A549 (cell line): ENCODE measurements at regions of chr5 and their contacts with region 1.

Region 1: DNA sequence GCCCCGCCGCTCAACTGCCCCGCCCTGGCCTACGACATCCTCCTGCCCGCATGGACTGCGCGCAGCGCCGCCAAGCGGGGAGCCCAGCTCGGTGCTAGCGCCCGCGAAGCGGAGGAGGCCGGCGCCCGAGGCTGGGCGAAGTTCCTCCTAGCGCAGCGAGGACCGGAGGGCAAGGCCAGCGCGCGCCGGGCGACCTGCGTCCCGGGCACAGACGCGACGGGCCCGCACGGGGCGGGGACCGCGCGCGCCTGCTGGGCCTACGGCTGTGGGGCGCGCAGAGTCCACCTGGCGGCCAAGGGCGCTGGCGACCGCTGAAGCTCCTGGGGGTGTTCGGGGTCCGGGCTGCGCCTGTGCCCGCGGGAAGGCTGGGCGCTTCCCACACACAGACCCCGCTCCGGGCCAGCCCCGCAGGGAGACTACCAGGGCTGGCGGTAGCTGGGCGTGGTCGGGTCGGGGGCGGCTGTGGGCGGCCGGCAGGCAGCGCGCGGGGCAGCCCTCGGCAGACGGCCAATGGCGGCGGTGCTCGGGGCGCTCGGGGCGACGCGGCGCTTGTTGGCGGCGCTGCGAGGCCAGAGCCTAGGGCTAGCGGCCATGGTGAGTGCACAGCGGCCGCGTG is at the start of gene PCBD2:
- DNase-seq: peak; percentile 83 to 94
- ATAC-seq: peak; percentile 89 to 92
- H3K4me3 ChIP-seq: peak within 1 kb of the TSS; percentile 74
- H3K27ac ChIP-seq: peak within 1 kb of the TSS; percentile 94 to 98
- H3K4me1 ChIP-seq: peaks cover 7% of the 10 kb centered on the region; the same call in 1 of the 3 replicates
- CTCF ChIP-seq: peak; percentile 96
- EP300 ChIP-seq: no peak
- POLR2A ChIP-seq: peak; percentile 65
- RAD21 ChIP-seq: peak; percentile 57 to 78
- polyA plus RNA-seq, gene PCBD2: 13.3 and 13.6 TPM in 2 replicates

Region 2: GRCh38 chr5:134738133-134738962 is 166.4 kb before region 1 on chr5 and contains the start of gene CAMLG:
- CTCF ChIA-PET with region 1: interaction called, 32 read pairs
- POLR2A ChIA-PET with region 1: interaction called, 11 read pairs
- DNase-seq: peak; percentile 84 to 99
- ATAC-seq: peak; percentile 93 to 96
- H3K4me3 ChIP-seq: peak within 1 kb of the TSS; percentile 85
- H3K27ac ChIP-seq: peak within 1 kb of the TSS; percentile 85 to 88
- H3K4me1 ChIP-seq: peaks cover 13% of the 10 kb centered on the region; the same call in 2 of the 3 replicates
- CTCF ChIP-seq: peak; percentile 65
- EP300 ChIP-seq: no peak
- POLR2A ChIP-seq: peak; percentile 75
- RAD21 ChIP-seq: peak; percentile 57 to 63
- polyA plus RNA-seq, gene CAMLG: 18.0 and 26.2 TPM in 2 replicates

Region 3: GRCh38 chr5:134758504-134759341 is 146.0 kb before region 1 on chr5 and contains the start of gene DDX46:
- CTCF ChIA-PET with region 1: interaction called, 15 read pairs
- POLR2A ChIA-PET with region 1: interaction called, 8 read pairs
- DNase-seq: peak; percentile 94 to 95
- ATAC-seq: peak; percentile 98 to 99
- H3K4me3 ChIP-seq: peak within 1 kb of the TSS; percentile 99
- H3K27ac ChIP-seq: peak within 1 kb of the TSS; percentile 93
- H3K4me1 ChIP-seq: peaks cover 14% of the 10 kb centered on the region
- CTCF ChIP-seq: peak; percentile 74
- EP300 ChIP-seq: no peak
- POLR2A ChIP-seq: peak; percentile 84
- RAD21 ChIP-seq: no peak
- polyA plus RNA-seq, gene DDX46: 74.7 and 104 TPM in 2 replicates

Region 4: DNA sequence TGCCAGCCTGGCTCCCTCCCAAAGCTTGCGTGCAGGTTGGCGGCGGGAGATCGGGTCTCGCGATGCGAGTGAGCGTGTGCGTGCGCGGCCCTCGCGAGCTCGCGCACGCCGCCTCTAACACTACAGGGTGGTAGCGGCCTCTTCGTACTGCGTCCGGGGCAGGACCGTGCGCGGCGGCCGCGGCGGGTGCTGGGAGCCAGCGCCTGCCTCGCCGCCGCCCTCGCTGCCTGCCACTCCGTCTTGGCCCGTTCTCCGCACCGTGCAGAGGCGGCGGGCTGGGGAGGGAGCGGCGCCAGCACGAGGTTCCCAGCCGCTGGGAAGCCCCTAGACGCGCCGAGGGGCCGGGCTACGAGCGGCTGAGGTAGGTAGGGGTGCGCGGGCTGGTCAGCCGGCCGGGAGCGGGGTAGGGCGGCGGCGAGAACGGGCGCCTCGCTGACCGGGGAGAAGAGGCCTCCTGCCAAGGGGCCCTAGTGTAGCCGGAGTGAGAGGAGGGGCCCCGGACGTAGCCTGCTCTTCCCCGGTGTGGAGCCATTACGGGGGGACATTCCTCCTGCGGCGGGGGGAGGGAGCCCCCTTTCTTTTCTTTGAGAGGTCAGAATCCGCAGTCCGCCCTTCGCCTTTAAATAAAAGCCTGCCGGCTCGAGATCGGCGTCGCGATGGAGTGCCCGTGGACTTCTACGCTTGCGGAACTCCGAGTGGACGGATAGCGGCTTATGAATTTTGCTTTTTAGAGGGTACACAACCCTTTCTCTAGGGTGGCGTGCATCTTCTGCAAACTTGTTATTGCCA is 58.7 kb before region 1 on chr5 and contains the start of gene C5orf24:
- CTCF ChIA-PET with region 1: interaction called, 12 read pairs
- POLR2A ChIA-PET with region 1: interaction called, 15 read pairs
- DNase-seq: peak; percentile 88 to 96
- ATAC-seq: peak; percentile 94
- H3K4me3 ChIP-seq: peak within 1 kb of the TSS; percentile 84
- H3K27ac ChIP-seq: peak within 1 kb of the TSS; percentile 94 to 98
- H3K4me1 ChIP-seq: peaks cover 69% of the 10 kb centered on the region
- CTCF ChIP-seq: no peak
- EP300 ChIP-seq: no peak
- POLR2A ChIP-seq: peak; percentile 98
- RAD21 ChIP-seq: no peak
- polyA plus RNA-seq, gene C5orf24: 44.6 and 53.7 TPM in 2 replicates

Region 5: DNA sequence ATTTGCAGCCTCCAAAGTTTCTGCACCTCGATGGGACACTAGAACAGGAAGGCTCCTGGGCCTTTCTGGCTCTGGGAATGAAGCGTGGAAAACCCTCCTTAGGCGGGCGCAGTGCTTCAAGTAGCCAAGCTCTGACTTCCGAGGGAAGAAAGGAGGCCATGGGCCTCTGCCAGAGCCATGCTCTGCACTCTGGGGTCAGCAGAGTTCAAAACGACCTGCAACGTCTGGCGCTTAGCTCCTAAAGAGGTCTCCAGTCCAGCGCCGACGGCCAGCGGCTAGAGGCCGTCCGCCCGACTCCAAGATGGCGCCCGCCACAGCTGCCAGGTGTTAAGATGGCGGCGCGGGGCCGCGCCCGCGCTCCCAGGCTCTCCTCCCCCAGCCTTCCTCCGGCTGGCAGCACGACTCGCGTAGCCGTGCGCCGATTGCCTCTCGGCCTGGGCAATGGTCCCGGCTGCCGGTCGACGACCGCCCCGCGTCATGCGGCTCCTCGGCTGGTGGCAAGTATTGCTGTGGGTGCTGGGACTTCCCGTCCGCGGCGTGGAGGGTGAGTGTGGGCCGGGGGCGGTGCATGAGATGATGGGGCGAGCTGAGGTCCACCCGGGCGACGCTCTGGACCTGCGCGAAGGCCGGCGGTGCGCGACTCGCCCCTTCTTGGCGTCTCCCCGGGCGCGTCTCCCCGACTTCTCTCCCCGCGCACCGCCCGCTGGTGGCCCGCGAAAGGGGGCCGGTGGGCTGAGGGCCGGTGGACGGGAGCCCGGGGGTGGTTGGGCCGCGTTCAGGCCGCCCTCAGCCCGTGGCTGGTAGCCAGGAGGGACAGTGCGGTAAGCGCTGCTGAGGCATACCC is 30.5 kb before region 1 on chr5 and contains the start of gene TXNDC15:
- CTCF ChIA-PET with region 1: interaction called, 13 read pairs
- POLR2A ChIA-PET with region 1: interaction called, 20 read pairs
- DNase-seq: peak; percentile 85 to 89
- ATAC-seq: peak; percentile 91 to 96
- H3K4me3 ChIP-seq: peak within 1 kb of the TSS; percentile 78
- H3K27ac ChIP-seq: peak within 1 kb of the TSS; percentile 95 to 96
- H3K4me1 ChIP-seq: peaks cover 10% of the 10 kb centered on the region; the same call in 2 of the 3 replicates
- CTCF ChIP-seq: no peak
- EP300 ChIP-seq: no peak
- POLR2A ChIP-seq: peak; percentile 97
- RAD21 ChIP-seq: no peak
- polyA plus RNA-seq, gene TXNDC15: 61.0 and 85.2 TPM in 2 replicates

Region 6: DNA sequence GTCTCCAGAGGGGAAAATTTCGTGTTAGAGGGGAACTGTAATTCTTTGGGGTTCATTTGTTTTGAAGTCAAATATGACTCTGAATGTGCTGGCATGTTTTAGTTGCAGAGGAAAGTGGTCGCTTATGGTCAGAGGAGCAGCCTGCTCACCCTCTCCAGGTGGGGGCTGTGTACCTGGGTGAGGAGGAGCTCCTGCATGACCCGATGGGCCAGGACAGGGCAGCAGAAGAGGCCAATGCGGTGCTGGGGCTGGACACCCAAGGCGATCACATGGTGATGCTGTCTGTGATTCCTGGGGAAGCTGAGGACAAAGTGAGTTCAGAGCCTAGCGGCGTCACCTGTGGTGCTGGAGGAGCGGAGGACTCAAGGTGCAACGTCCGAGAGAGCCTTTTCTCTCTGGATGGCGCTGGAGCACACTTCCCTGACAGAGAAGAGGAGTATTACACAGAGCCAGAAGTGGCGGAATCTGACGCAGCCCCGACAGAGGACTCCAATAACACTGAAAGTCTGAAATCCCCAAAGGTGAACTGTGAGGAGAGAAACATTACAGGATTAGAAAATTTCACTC is 17.1 kb before region 1 on chr5:
- CTCF ChIA-PET with region 1: interaction called, 28 read pairs
- POLR2A ChIA-PET with region 1: no interaction called
- DNase-seq: no peak
- ATAC-seq: 0 out of 6 replicates have a peak, but pooled peaks of 1 of the 2 experiments have one; percentile 19
- H3K4me3 ChIP-seq: no peak overlapping the region
- H3K27ac ChIP-seq: no peak overlapping the region
- H3K4me1 ChIP-seq: no peaks in the 10 kb centered on the region
- CTCF ChIP-seq: no peak
- EP300 ChIP-seq: no peak
- POLR2A ChIP-seq: no peak
- RAD21 ChIP-seq: no peak

Region 7: GRCh38 chr5:134917070-134917815 is 12.5 kb after region 1 on chr5:
- CTCF ChIA-PET with region 1: interaction called, 24 read pairs
- POLR2A ChIA-PET with region 1: interaction called, 5 read pairs
- DNase-seq: peak in 1 of 2 experiments; percentile 16
- ATAC-seq: peak in 1 of 2 experiments; percentile 74; a peak in 3 of 6 replicates
- H3K4me3 ChIP-seq: no peak overlapping the region
- H3K27ac ChIP-seq: no peak overlapping the region
- H3K4me1 ChIP-seq: no peaks in the 10 kb centered on the region
- CTCF ChIP-seq: peak; percentile 46
- EP300 ChIP-seq: no peak
- POLR2A ChIP-seq: no peak
- RAD21 ChIP-seq: peak; percentile 40 to 50; a peak in 4 of 5 replicates

Region 8: DNA sequence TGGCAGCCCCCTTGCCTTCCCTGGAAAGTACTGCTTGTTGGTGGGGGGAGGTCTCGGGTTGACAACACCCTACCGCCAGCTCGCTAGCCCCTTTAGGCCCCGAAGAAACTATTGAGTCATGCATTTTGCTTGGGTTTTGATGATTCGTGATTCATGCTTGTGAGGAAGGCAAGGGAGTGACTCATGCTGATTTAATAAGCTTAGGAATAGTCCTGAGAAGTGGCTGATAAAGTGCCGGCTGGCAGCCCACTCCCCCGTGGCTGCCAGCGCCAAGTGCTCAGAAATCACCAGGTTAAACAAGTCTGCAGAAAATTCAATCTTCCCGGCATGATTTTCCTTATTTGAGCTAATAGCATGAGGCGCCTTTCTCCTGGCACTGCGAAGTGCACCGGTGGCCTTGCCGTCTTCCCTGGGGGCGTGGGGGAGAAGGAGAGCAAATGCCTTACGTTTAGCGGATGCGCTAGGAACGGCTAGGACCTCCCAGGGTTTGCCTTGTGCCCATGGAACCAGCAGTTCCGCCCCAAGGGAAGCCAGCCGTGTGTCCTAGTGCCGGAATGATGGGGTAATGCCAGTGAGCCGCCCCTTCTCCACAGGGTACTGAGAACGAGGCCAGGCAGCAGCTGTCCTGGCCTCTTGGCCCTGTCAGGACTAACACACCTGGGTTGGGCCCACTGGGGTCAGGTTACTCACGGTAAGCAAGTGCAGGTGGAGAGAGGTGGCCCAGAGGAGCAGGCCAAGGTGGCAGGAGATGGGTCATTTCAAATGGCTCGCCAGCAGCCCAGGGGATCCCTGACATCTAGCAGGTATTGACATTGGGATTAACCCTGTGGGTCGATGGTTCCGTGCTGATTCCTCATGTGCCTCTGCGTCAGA is 342.4 kb after region 1 on chr5:
- CTCF ChIA-PET with region 1: no interaction called
- POLR2A ChIA-PET with region 1: no interaction called
- DNase-seq: peak; percentile 85 to 86
- ATAC-seq: peak; percentile 80 to 86
- H3K4me3 ChIP-seq: 0 out of 3 replicates have a peak overlapping the region, but pooled peaks have one; percentile 17
- H3K27ac ChIP-seq: peak overlapping the region; percentile 93 to 98
- H3K4me1 ChIP-seq: peaks cover 63% of the 10 kb centered on the region
- CTCF ChIP-seq: no peak
- EP300 ChIP-seq: peak in 1 of 2 experiments; percentile 58; a peak in 2 of 5 replicates
- POLR2A ChIP-seq: no peak
- RAD21 ChIP-seq: no peak; a peak in 1 of 5 replicates